ENCODE measurements at regions of chr10 and their contacts with region 1.

Region 1: GRCh38 chr10:69639291-69640195 is 9.5 kb downstream of the FAM241B start:
- DNase-seq: peak; percentile 69
- H3K4me3 ChIP-seq: no peak overlapping the region
- H3K27ac ChIP-seq: no peak overlapping the region
- H3K4me1 ChIP-seq: peaks cover 2% of the 10 kb centered on the region
- H3K27me3 ChIP-seq: no peaks in the 10 kb centered on the region
- CTCF ChIP-seq: peak; percentile 79 to 89 (median 87)
- POLR2A ChIP-seq: no peak

Region 2: DNA sequence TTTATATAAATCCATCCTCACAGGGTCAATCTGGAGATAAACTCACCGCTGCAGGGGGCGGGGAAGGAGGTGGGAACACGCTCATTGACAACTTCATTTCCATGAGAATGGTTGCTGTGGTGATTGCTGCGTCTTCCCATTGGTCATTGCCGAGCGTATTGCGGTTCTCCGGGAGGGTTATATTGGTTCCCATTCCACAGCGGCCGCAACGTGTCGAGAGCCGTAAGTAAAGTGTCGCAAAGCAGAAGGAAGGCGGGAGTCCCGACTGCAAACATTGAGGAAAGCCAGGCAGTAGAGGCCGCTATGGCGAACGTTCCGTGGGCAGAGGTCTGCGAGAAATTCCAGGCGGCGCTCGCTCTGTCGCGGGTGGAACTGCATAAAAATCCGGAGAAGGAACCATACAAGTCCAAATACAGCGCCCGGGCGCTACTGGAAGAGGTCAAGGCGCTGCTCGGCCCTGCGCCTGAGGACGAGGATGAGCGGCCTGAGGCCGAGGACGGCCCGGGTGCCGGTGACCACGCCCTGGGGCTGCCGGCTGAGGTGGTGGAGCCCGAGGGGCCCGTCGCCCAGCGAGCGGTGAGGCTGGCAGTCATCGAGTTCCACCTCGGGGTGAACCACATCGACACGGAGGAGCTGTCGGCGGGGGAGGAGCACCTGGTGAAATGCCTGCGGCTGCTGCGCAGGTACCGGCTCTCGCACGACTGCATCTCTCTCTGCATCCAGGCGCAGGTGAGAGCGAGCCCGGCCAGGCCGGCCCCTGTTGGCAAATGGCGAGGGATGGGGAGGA is 650.8 kb before region 1 on chr10 and contains the start of gene KIFBP:
- intact Hi-C with region 1: no loop called
- DNase-seq: peak; percentile 96
- H3K4me3 ChIP-seq: peak within 1 kb of the TSS; percentile 68 to 80
- H3K27ac ChIP-seq: peak within 1 kb of the TSS; percentile 81 to 83
- H3K4me1 ChIP-seq: peaks cover 4% of the 10 kb centered on the region
- H3K27me3 ChIP-seq: no peaks in the 10 kb centered on the region
- CTCF ChIP-seq: peak; percentile 11 to 54 (median 44)
- POLR2A ChIP-seq: peak; percentile 89
- total RNA-seq, gene KIFBP: 37.3 to 46.7 TPM

Region 3: DNA sequence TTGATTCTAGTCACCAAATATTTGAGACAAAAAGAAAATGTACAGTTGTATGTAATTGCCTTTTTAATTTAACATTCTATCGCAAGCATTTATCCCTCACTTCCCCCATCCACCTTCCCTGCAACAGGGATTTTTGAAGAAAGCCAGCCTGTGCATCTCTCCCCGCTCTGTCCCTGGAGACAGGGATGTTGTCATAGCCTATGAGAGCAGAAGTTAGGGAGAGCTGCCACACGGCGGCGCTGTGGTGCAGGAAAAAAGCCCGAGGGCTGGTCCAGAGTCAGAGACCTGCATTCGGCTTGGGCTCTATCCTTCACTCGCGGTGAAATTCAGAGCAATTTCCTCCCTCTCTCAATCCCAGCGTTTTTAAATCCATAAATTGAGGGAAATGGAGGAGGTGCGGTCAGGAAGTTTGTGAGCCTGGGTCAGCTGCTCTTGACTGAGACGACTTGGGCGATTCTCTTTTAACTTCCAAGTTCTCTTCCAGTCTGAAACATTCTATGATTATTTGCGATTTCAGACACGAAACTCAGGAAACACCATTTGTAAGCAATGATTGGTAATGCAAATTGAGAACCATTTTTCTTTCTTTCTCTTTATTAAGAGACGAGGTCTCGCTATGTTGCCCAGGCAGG is 401.9 kb before region 1 on chr10:
- intact Hi-C with region 1: loop called (anchors 5 kb)
- DNase-seq: peak; percentile 79
- H3K4me3 ChIP-seq: no peak overlapping the region
- H3K27ac ChIP-seq: no peak overlapping the region
- H3K4me1 ChIP-seq: no peaks in the 10 kb centered on the region
- H3K27me3 ChIP-seq: no peaks in the 10 kb centered on the region
- CTCF ChIP-seq: peak; percentile 76 to 97 (median 95)
- POLR2A ChIP-seq: no peak

Region 4: DNA sequence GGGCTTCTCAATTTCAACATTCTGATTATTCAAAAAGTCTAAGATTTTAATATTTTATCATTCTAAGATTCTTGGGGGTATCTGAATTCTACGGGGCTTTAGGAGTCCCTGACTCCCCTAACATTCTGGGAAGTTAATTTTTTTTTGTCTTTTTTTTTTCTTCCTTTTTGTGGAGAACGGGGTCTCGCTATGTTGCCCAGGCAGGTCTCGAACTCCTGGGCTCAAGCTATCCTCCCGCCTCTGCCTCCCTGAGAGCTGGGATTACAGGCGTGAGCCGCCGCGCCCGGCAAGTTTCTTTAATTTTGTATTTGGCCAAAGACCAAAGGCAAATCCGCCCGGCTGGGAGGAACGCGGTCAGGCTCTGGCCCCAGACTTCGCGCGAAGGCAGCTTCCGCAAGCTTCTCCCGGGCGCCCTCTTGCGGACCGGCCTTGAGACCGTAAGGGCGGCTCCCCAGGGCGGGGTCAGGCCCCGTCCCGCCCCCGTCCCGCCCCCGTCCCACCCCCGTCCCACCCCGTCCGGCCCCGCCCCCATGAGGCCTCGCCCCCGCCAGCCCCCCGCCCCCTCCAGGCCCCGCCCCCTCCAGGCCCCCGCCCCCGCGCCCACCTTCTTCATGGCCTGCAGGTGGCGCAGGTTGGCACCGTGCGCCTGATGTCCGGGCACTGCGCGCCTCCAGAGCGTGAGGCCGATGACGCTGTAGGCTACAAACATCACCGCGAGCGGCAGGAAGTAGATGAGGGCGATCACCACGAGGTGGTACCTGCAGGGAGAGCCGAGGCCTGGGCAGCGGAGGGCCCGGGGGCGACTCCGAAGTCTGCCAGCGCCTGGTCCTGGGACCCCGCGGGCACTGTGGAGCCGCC is 231.0 kb before region 1 on chr10:
- intact Hi-C with region 1: loop called (anchors 5 kb)
- DNase-seq: peak; percentile 94
- H3K4me3 ChIP-seq: peak overlapping the region; percentile 27 to 32
- H3K27ac ChIP-seq: peak overlapping the region; percentile 89
- H3K4me1 ChIP-seq: peaks cover 3% of the 10 kb centered on the region
- H3K27me3 ChIP-seq: no peaks in the 10 kb centered on the region
- CTCF ChIP-seq: peak; percentile 60 to 92 (median 66)
- POLR2A ChIP-seq: peak; percentile 42

Region 5: GRCh38 chr10:69515699-69516259 is 123.8 kb before region 1 on chr10:
- intact Hi-C with region 1: loop called (anchors 5 kb)
- DNase-seq: peak; percentile 59
- H3K4me3 ChIP-seq: no peak overlapping the region
- H3K27ac ChIP-seq: no peak overlapping the region
- H3K4me1 ChIP-seq: no peaks in the 10 kb centered on the region
- H3K27me3 ChIP-seq: no peaks in the 10 kb centered on the region
- CTCF ChIP-seq: peak; percentile 39 to 79 (median 72)
- POLR2A ChIP-seq: no peak

Region 6: GRCh38 chr10:69716711-69717560 is 77.4 kb after region 1 on chr10:
- intact Hi-C with region 1: loop called (anchors 5 kb)
- DNase-seq: peak; percentile 59
- H3K4me3 ChIP-seq: no peak overlapping the region
- H3K27ac ChIP-seq: no peak overlapping the region
- H3K4me1 ChIP-seq: no peaks in the 10 kb centered on the region
- H3K27me3 ChIP-seq: no peaks in the 10 kb centered on the region
- CTCF ChIP-seq: peak; percentile 49 to 81 (median 72)
- POLR2A ChIP-seq: no peak

Region 7: DNA sequence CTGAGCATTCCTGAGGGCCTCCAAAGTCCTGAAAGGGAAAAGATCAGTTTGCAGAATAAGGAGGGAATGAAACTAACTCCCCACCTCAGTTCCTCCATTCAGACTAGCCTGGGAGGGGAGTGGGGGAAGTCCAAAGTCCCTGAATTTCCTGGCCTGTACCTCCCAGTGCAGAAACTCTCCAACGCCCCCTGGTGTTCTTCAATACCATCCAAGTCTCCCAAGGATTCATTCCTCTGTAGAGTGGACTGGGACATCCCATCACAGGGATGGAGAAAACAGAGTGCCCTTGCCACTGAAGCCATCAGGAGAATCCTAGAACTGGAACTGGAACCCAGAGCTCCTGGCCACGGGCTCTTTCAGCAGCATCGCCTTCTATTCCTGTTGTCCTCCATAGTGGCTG is 160.6 kb after region 1 on chr10:
- intact Hi-C with region 1: loop called (anchors 5 kb)
- DNase-seq: peak; percentile 28
- H3K4me3 ChIP-seq: no peak overlapping the region
- H3K27ac ChIP-seq: no peak overlapping the region
- H3K4me1 ChIP-seq: peaks cover 3% of the 10 kb centered on the region
- H3K27me3 ChIP-seq: no peaks in the 10 kb centered on the region
- CTCF ChIP-seq: peak in 3 of 4 experiments; percentile 33 to 39 (median 38)
- POLR2A ChIP-seq: no peak